ENCODE measurements at regions of chr20 and their contacts with region 1.

Region 1: DNA sequence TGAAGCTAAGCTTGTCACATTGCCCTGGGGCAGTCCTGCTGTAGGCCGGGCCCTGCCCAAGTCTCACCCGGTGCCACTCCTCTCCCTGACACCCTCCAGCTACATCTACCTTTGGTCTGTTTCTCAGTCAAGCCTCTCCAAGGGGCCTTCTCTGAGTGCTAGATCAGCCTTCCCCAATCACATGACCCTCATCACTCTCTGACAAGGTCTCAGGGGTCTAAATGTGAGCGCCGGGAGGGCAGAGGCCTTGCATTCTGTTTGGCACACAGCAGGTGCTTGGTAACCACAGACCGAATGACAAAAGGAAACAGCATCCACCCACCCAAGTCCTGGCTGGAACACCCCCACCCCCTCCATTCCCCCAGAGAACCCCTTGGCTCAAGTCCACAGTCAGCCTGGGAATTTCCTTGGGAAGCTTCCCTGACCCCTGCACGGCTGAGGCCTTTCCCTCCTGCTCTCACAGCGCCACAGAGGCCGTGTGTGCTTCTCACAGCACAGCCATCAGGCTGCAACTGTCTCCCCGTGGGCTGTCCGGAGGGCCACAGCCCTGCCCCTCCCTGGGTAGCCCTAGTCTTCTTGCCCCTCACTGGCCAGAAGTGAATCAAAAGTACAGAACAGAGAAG is 32.9 kb downstream of the PKIG start:
- DNase-seq: peak in 8 of 10 donors; percentile 9 to 65 (median 36)
- ATAC-seq: peak; percentile 22 to 24
- H3K4me3 Mint-ChIP-seq: peak overlapping the region; percentile 46 to 83 (median 77)
- H3K27ac Mint-ChIP-seq: peak overlapping the region; percentile 97 to 99 (median 98)
- H3K4me1 Mint-ChIP-seq: peaks cover 52 to 86% (median 80%) of the 10 kb centered on the region in 4 donors
- H3K27me3 Mint-ChIP-seq: peaks cover 0 to 2% (median 0%) of the 10 kb centered on the region in 5 donors

Region 2: DNA sequence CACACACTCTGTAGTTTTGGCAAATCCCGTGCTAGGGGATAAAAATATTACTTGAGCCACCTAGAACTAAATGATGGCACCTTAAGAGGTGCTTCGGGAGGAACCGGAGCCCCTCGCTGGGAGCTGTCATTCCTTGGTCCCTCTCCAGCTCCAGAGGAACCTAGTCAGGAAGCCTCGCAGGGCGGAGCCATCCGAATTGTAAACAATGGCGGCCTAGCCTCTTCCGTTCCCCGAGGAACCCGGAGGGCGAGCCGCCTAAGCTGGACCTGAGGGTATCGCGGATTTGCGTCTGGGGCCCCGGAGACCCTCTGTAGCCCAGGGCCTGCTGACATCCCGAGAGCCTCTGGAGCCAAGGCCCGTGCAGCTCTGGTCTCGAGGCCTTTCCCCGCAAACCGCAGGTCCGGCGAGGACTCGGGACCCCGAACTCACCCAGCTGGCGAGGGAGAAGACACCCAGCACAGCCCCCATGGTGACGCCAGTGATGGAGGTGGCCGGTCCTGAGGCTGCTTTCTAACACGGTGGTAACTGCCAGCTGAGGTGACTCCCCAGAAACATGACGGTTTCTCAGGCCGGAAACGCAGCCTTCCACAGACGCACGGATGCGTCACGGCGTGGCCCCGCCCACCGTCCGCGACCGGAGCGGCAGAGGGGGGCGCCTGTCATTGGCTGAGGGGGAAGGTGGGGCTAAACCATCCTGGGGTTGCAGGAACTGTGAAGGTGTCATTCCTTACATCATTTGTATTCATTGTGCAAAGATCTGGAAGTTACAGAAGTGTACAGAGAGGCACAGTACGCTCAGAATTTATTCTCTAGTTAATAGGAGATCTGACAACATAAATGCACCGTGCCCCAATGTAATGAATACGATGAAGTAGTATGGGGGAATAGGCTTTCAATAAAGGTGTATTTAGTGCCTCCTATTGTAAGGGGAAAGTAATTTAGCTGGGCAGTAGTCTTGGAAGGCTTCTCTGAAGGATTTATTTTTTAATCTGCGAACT is 93.5 kb before region 1 on chr20 and contains the start of gene SERINC3:
- POLR2A ChIA-PET with region 1: interaction called, 19 read pairs
- DNase-seq: peak; percentile 95 to 99 (median 98)
- ATAC-seq: peak; percentile 89 to 97
- H3K4me3 Mint-ChIP-seq: peak within 1 kb of the TSS; percentile 83 to 92 (median 90)
- H3K27ac Mint-ChIP-seq: peak within 1 kb of the TSS; percentile 86 to 99 (median 96)
- H3K4me1 Mint-ChIP-seq: peaks cover 24 to 65% (median 59%) of the 10 kb centered on the region in 4 donors
- H3K27me3 Mint-ChIP-seq: no peaks in the 10 kb centered on the region
- polyA plus RNA-seq, gene SERINC3: 163 to 207 (median 173) TPM

Region 3: DNA sequence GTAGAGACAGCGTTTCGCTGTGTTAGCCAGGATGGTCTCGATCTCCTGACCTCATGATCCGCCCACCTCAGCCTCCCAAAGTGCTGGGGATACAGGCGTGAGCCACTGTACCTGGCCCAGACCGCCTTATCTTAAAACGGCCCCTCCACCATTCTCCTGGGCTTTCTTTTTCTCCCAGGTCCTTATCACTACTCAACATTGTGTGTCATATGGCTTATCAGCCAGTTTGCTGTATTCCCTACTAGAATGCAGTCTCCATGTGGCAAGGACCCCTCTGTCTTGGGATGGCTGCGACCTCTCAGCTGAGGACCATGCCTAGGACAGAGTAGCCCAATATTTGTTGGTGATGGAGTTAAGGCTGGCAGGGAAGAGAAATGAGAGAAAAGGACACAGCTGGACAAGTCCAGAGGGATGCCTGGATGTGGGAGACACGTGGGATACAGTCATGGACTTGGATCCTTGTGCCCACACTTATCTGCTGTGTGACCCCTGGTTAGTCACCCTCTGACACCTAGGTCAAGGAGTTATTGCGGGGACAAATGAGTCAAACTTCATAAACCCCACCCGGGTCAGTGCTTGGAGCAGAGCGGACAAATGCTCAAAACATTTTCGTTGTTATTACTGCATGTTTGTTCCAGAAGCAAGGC is 12.2 kb after region 1 on chr20:
- POLR2A ChIA-PET with region 1: interaction called, 10 read pairs
- DNase-seq: no peak
- ATAC-seq: no peak
- H3K4me3 Mint-ChIP-seq: no peak overlapping the region
- H3K27ac Mint-ChIP-seq: peak overlapping the region in 7 of 10 donors; percentile 3 to 94 (median 48)
- H3K4me1 Mint-ChIP-seq: peaks cover 9 to 19% (median 17%) of the 10 kb centered on the region in 4 donors
- H3K27me3 Mint-ChIP-seq: no peaks in the 10 kb centered on the region

Region 4: GRCh38 chr20:44642203-44643153 is 27.2 kb after region 1 on chr20:
- POLR2A ChIA-PET with region 1: interaction called, 84 read pairs
- DNase-seq: peak in 5 of 10 donors; percentile 16 to 49 (median 39)
- ATAC-seq: peak; percentile 43 to 48
- H3K4me3 Mint-ChIP-seq: peak overlapping the region; percentile 38 to 83 (median 67)
- H3K27ac Mint-ChIP-seq: peak overlapping the region; percentile 91 to 100 (median 96)
- H3K4me1 Mint-ChIP-seq: peaks cover 45 to 78% (median 71%) of the 10 kb centered on the region in 4 donors
- H3K27me3 Mint-ChIP-seq: no peaks in the 10 kb centered on the region

Region 5: DNA sequence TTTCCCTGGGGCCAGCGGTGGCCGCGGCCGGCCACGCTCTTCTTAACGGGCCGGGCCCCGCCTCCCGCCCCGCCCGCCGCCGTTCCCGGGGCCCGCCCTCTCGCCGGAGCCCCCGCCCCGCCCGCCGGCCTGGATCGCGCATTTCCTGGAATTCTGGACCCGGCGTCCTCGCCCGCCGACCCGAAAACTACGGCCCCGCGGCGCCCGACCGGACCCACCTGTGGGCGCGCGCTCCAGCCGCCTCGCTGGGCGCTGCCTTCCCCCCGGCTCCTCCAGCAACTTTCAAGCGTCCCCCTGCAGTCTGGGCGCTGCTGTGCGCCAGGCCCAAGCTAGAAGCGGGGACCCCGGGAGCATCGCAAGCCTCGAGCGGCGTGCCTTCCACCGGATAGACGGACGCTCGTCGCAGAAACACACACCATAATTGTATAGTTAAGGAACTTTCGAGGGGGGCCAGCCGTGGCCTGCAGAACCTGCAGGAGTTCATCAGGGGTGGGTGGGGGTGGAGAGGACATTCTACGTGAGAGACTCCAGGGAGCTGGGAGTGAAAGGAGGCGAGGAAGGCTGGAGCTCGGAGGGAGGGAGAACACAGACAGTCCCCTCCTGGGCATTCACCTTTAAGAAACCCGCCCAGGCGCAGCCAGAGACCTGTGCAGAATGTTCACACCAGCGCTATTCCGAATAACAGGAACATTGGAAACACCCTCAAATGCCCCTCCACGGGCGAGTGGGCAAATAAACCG is 36.6 kb after region 1 on chr20 and contains the start of gene ADA:
- POLR2A ChIA-PET with region 1: interaction called, 84 read pairs
- DNase-seq: peak; percentile 21 to 71 (median 51)
- ATAC-seq: peak; percentile 76 to 80
- H3K4me3 Mint-ChIP-seq: peak within 1 kb of the TSS; percentile 82 to 96 (median 92)
- H3K27ac Mint-ChIP-seq: peak within 1 kb of the TSS; percentile 85 to 100 (median 92)
- H3K4me1 Mint-ChIP-seq: peaks cover 18 to 56% (median 52%) of the 10 kb centered on the region in 4 donors
- H3K27me3 Mint-ChIP-seq: peaks cover 0 to 2% (median 0%) of the 10 kb centered on the region in 5 donors
- polyA plus RNA-seq, gene ADA: 31.2 to 47.1 (median 38.2) TPM